A549 (cell line): ENCODE measurements at regions of chr5 and their contacts with region 1.

Region 1: DNA sequence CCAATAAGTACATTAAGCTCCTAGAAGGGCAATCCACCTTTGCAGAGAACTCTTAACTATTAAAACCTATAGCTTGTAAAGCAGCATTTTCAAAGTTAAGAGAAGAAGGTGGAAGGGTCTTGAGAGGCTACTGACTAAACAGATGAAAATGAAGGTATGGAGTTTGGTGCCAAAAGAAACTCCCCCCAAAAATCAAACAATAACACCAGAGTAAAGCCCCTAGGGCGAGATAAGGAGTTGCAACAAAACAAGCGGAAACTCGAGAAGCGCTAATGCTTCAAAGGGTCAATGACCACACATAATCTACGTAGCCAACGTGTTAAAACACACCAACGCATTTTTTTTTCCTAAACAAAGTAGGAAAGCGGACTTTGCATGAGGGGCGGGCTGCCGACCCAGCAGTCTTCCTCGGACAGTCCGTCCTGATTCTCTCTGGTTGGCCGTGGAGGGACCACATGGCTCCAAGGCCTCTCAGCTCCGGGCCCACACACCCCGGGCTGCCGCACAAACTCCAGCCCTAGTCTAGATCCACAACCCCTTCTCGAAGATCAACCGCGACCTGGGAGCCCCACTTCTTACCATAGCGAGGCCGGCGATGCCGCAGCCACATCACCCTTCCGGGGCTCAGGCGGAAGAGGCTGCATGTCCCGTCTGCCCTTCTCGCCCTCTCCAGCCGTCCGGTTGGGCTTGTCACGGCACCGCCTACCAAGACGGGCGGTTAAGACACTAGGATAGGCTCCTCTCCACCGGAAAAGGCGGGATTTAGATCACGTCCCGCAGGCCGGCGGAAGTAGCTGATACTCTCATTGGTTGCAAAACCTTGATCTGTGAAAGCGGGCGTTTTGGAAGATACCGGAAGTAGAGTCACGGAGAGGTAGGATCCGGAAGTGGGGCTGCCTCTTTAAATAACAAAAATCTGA is at the starts of genes TMEM167A and XRCC4:
- DNase-seq: peak; percentile 96 to 99
- ATAC-seq: peak; percentile 100
- H3K4me3 ChIP-seq: peak within 1 kb of the TSS; percentile 70
- H3K27ac ChIP-seq: peak within 1 kb of the TSS; percentile 88 to 95
- H3K4me1 ChIP-seq: peaks cover 12% of the 10 kb centered on the region; the same call in 2 of the 3 replicates
- CTCF ChIP-seq: no peak
- EP300 ChIP-seq: no peak
- POLR2A ChIP-seq: peak; percentile 87
- RAD21 ChIP-seq: no peak; a peak in 1 of 5 replicates
- polyA plus RNA-seq, gene TMEM167A: 97.6 and 136 TPM in 2 replicates
- polyA plus RNA-seq, gene XRCC4: 10.8 and 14.3 TPM in 2 replicates

Region 2: DNA sequence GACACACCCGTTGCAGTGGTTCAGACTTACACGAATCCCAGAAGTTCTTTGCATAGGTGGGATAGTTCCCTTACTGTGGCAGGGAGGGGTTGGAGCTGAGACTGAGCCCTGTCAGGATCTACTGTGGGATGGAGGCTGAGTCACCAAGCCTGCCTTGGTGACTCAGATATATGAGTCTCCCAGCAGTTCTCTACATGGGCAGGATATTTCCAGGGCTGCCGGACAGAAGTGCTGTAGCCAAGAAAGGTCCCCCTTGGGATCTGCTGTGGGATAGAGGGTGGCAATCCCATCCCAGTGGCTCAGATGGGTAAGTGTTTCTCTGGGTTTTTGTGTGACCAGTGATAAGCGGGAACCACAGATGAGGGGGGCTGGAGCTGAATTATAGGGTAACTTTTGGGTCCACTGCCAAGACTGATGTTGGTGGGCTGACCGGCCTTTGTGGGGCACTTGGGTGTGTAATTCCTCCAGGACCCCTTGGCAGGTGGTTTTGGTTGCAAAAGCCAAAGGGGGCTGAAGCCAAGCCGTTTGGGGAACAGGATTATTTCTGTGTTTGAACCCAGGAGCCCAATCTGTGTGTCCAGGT is 19.0 kb after region 1 on chr5:
- CTCF ChIA-PET with region 1: no interaction called
- POLR2A ChIA-PET with region 1: interaction called, 11 read pairs
- DNase-seq: peak; percentile 58 to 62
- ATAC-seq: peak; percentile 100
- H3K4me3 ChIP-seq: no peak overlapping the region
- H3K27ac ChIP-seq: peak overlapping the region; percentile 49 to 82; a peak in 5 of 6 replicates
- H3K4me1 ChIP-seq: peaks cover 35% of the 10 kb centered on the region
- CTCF ChIP-seq: no peak
- EP300 ChIP-seq: no peak
- POLR2A ChIP-seq: no peak
- RAD21 ChIP-seq: no peak